PC-9 (cell line): ENCODE measurements at regions of chr20 and their contacts with region 1.

Region 1: GRCh38 chr20:5126512-5127203 is at the start of gene CDS2:
- DNase-seq: peak; percentile 97 to 100
- H3K4me3 ChIP-seq: peak within 1 kb of the TSS; percentile 69
- H3K27ac ChIP-seq: peak within 1 kb of the TSS; percentile 67
- H3K4me1 ChIP-seq: peaks cover 14% of the 10 kb centered on the region
- H3K27me3 ChIP-seq: no peaks in the 10 kb centered on the region
- CTCF ChIP-seq: peak; percentile 59; the same call in 1 of the 2 replicates
- total RNA-seq, gene CDS2: 37.0 and 42.8 TPM in 2 replicates

Region 2: GRCh38 chr20:4633780-4634179 is 492.9 kb before region 1 on chr20:
- CTCF ChIA-PET with region 1: no interaction called
- POLR2A ChIA-PET with region 1: interaction called, 11 read pairs
- intact Hi-C with region 1: no loop called
- DNase-seq: peak; percentile 28 to 94
- H3K4me3 ChIP-seq: no peak overlapping the region
- H3K27ac ChIP-seq: peak overlapping the region; percentile 71
- H3K4me1 ChIP-seq: peaks cover 23% of the 10 kb centered on the region
- H3K27me3 ChIP-seq: no peaks in the 10 kb centered on the region
- CTCF ChIP-seq: no peak

Region 3: GRCh38 chr20:4961746-4962145 is 164.9 kb before region 1 on chr20:
- CTCF ChIA-PET with region 1: interaction called, 10 read pairs
- POLR2A ChIA-PET with region 1: no interaction called
- intact Hi-C with region 1: no loop called
- DNase-seq: no peak
- H3K4me3 ChIP-seq: no peak overlapping the region
- H3K27ac ChIP-seq: no peak overlapping the region
- H3K4me1 ChIP-seq: no peaks in the 10 kb centered on the region
- H3K27me3 ChIP-seq: no peaks in the 10 kb centered on the region
- CTCF ChIP-seq: no peak

Region 4: GRCh38 chr20:5168651-5169396 is 42.2 kb after region 1 on chr20:
- CTCF ChIA-PET with region 1: interaction called, 11 read pairs
- POLR2A ChIA-PET with region 1: interaction called, 13 read pairs
- intact Hi-C with region 1: no loop called
- DNase-seq: peak; percentile 48 to 49
- H3K4me3 ChIP-seq: no peak overlapping the region
- H3K27ac ChIP-seq: peak overlapping the region; percentile 64
- H3K4me1 ChIP-seq: peaks cover 18% of the 10 kb centered on the region
- H3K27me3 ChIP-seq: no peaks in the 10 kb centered on the region
- CTCF ChIP-seq: no peak

Region 5: GRCh38 chr20:5205348-5206210 is 78.9 kb after region 1 on chr20:
- CTCF ChIA-PET with region 1: interaction called, 12 read pairs
- POLR2A ChIA-PET with region 1: interaction called, 4 read pairs
- intact Hi-C with region 1: no loop called
- DNase-seq: peak; percentile 46 to 68
- H3K4me3 ChIP-seq: no peak overlapping the region
- H3K27ac ChIP-seq: no peak overlapping the region
- H3K4me1 ChIP-seq: no peaks in the 10 kb centered on the region
- H3K27me3 ChIP-seq: no peaks in the 10 kb centered on the region
- CTCF ChIP-seq: peak; percentile 89

Region 6: DNA sequence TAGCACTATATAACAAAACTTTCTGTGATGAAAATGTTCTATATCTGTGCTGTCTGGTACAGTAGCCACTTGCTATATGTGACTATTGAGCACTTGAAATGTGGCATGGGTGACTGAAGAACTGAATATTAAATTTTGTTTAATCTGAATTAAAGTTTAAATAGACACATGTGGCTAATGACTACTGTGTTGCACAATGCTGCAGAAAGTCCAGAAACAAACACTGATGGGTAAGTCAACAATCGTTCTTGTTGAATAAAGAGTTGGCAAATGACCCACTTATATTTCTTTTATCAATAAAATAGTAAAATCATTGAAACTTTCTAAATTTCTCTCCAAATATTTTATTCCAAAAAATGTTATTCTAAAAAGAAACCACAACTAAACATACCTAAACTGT is 108.3 kb after region 1 on chr20:
- CTCF ChIA-PET with region 1: no interaction called
- POLR2A ChIA-PET with region 1: no interaction called
- intact Hi-C with region 1: no loop called
- DNase-seq: no peak
- H3K4me3 ChIP-seq: no peak overlapping the region
- H3K27ac ChIP-seq: no peak overlapping the region
- H3K4me1 ChIP-seq: no peaks in the 10 kb centered on the region
- H3K27me3 ChIP-seq: peaks cover 68% of the 10 kb centered on the region
- CTCF ChIP-seq: no peak

Region 7: DNA sequence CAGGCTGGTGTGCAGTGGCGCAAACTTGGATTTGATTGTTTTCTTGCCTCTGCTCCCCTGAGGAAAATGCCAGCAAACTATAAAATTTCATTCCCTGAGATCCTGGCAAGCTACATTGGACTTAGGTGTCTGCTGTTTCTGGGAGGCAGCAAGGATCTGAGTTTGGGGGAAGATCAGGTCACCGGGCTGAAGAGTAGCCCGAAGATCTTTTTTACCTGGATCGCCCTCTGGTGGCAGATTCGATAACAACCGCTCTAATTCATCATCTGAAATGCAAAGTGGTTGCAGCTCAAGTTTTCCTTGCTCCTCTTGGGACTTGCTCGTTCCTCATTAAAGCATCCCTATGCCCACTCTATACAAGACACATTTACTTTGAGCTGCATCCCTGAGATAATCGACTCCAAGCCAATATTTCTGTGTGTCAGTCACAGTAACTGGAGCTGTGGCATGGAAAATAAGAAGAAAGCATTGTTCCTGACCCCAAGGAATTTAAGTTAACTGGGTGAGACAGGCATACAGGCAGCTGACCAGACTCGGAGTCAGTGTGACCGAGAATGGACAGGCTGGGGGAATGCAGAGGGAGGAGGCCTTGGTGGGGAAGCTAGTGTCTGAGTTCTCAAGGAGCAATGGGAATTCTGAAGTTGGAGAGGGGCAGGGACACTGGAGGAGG is 321.9 kb after region 1 on chr20:
- CTCF ChIA-PET with region 1: interaction called, 5 read pairs
- POLR2A ChIA-PET with region 1: no interaction called
- intact Hi-C with region 1: loop called (anchors 1 kb)
- DNase-seq: peak; percentile 33 to 50
- H3K4me3 ChIP-seq: no peak overlapping the region
- H3K27ac ChIP-seq: no peak overlapping the region
- H3K4me1 ChIP-seq: no peaks in the 10 kb centered on the region
- H3K27me3 ChIP-seq: peaks cover 20% of the 10 kb centered on the region
- CTCF ChIP-seq: peak; percentile 82